ENCODE measurements at regions of chr10 and their contacts with region 1.

Region 1: GRCh38 chr10:62426600-62426999 is 52.4 kb downstream of the ZNF365 start:
- DNase-seq: no peak
- H3K4me3 ChIP-seq: no peak overlapping the region
- H3K27ac ChIP-seq: no peak overlapping the region
- H3K4me1 ChIP-seq: no peaks in the 10 kb centered on the region
- CTCF ChIP-seq: no peak

Region 2: GRCh38 chr10:62583876-62584615 is 157.4 kb after region 1 on chr10:
- CTCF ChIA-PET with region 1: no interaction called
- POLR2A ChIA-PET with region 1: no interaction called
- intact Hi-C with region 1: no loop called
- DNase-seq: no peak
- H3K4me3 ChIP-seq: no peak overlapping the region
- H3K27ac ChIP-seq: no peak overlapping the region
- H3K4me1 ChIP-seq: no peaks in the 10 kb centered on the region
- CTCF ChIP-seq: no peak

Region 3: GRCh38 chr10:63661347-63661746 is 1234.7 kb after region 1 on chr10:
- CTCF ChIA-PET with region 1: interaction called, 10 read pairs
- POLR2A ChIA-PET with region 1: no interaction called
- intact Hi-C with region 1: no loop called
- DNase-seq: no peak
- H3K4me3 ChIP-seq: no peak overlapping the region
- H3K27ac ChIP-seq: no peak overlapping the region
- H3K4me1 ChIP-seq: no peaks in the 10 kb centered on the region
- CTCF ChIP-seq: no peak

Measured in OCI-LY7 (cell line).